Activated CD8-positive, alpha-beta T cell treated with anti-CD3 and anti-CD28 coated beads, Interleukin-2, amount 10 ng/mL, durations not matched to agents 7 days and 5 days (primary cell): ENCODE measurements at regions of chr12 and their contacts with region 1.

Region 1: GRCh38 chr12:123232807-123233543 is at the starts of genes MPHOSPH9 and MTRFR:
- DNase-seq: peak; percentile 100
- ATAC-seq: peak; percentile 91
- H3K4me3 Mint-ChIP-seq: peak within 1 kb of the TSS; percentile 97
- H3K27ac Mint-ChIP-seq: peak within 1 kb of the TSS; percentile 97
- H3K4me1 Mint-ChIP-seq: peaks cover 65% of the 10 kb centered on the region
- H3K27me3 Mint-ChIP-seq: no peaks in the 10 kb centered on the region
- total RNA-seq, gene MPHOSPH9: 148 to 149 TPM
- total RNA-seq, gene MTRFR: 28.2 to 30.0 TPM

Region 2: GRCh38 chr12:122974274-122974891 is 258.6 kb before region 1 on chr12:
- CTCF ChIA-PET with region 1: interaction called, 14 read pairs
- POLR2A ChIA-PET with region 1: interaction called, 19 read pairs
- DNase-seq: peak; percentile 99
- ATAC-seq: peak; percentile 84
- H3K4me3 Mint-ChIP-seq: peak overlapping the region; percentile 99
- H3K27ac Mint-ChIP-seq: peak overlapping the region; percentile 100
- H3K4me1 Mint-ChIP-seq: peaks cover 40% of the 10 kb centered on the region
- H3K27me3 Mint-ChIP-seq: no peaks in the 10 kb centered on the region

Region 3: GRCh38 chr12:123075646-123076171 is 157.3 kb before region 1 on chr12:
- CTCF ChIA-PET with region 1: interaction called, 16 read pairs
- POLR2A ChIA-PET with region 1: interaction called, 25 read pairs
- DNase-seq: peak; percentile 90
- ATAC-seq: peak; percentile 86
- H3K4me3 Mint-ChIP-seq: peak overlapping the region; percentile 82
- H3K27ac Mint-ChIP-seq: peak overlapping the region; percentile 98
- H3K4me1 Mint-ChIP-seq: peaks cover 55% of the 10 kb centered on the region
- H3K27me3 Mint-ChIP-seq: no peaks in the 10 kb centered on the region

Region 4: DNA sequence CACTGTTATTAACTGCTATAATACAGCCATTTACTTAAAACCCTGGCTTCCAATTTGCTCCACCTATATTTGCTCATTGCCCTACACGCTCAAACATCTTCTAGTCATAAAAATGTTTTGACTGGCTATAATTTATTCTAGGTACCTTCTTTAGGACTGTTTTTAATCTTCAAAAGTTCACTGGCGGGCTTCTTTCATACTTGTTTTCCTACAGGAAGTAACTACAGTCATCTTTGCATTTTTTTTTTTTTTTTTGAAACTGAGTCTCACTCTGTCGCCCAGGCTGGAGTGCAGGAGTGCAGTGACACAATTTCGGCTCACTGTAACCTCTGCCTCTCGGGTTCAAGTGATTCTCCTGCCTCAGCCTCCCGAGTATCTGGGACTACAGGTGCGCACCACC is 32.6 kb before region 1 on chr12:
- CTCF ChIA-PET with region 1: interaction called, 23 read pairs
- POLR2A ChIA-PET with region 1: interaction called, 8 read pairs
- DNase-seq: no peak
- ATAC-seq: peak; percentile 15
- H3K4me3 Mint-ChIP-seq: no peak overlapping the region
- H3K27ac Mint-ChIP-seq: peak overlapping the region; percentile 83
- H3K4me1 Mint-ChIP-seq: peaks cover 19% of the 10 kb centered on the region
- H3K27me3 Mint-ChIP-seq: no peaks in the 10 kb centered on the region

Region 5: DNA sequence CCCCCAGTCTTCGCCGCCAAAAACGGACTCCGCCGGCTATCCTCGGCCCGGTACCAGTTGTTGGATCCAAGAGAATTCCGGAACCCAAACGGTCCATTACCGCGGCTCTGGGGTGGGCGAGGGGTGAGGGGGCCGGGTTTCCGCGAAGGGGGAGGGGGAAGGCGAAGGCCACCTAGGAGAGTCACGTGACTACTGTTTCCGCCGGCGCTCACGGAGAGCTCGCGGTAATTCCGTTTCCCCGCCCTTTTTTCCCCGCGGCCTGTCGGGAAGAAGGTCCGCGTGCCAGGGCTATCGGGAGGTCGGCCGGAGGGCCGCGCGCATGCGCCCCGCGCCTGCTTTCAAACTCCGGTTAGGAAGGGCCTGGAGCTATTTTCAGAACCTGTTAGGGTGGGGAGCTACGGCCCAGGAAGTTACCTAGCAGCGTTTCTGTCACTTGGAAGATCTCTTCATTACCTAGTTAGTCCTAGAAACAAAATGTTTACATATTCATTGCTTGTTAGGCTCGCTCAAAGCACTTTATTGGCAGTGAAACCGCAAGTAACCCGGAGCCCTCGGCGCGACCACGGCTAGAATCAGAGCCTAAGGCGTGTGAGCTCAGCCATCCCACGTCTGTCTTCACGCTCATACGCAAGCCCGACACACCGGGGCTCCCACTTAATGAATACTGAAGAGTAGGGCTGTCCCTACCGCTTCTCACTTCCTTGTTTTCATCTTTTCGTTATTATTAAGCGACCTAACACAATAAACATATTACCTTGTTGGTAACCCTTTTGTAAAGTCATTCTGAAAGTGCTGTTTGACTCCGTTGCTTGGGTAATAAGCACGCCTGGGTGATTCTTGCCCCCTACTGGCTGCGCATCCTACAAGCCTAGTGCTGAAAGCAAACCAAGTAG is 132.3 kb after region 1 on chr12:
- CTCF ChIA-PET with region 1: interaction called, 4 read pairs
- POLR2A ChIA-PET with region 1: interaction called, 14 read pairs
- DNase-seq: peak; percentile 99
- ATAC-seq: peak; percentile 77
- H3K4me3 Mint-ChIP-seq: peak overlapping the region; percentile 88
- H3K27ac Mint-ChIP-seq: peak overlapping the region; percentile 94
- H3K4me1 Mint-ChIP-seq: peaks cover 12% of the 10 kb centered on the region
- H3K27me3 Mint-ChIP-seq: no peaks in the 10 kb centered on the region

Region 6: DNA sequence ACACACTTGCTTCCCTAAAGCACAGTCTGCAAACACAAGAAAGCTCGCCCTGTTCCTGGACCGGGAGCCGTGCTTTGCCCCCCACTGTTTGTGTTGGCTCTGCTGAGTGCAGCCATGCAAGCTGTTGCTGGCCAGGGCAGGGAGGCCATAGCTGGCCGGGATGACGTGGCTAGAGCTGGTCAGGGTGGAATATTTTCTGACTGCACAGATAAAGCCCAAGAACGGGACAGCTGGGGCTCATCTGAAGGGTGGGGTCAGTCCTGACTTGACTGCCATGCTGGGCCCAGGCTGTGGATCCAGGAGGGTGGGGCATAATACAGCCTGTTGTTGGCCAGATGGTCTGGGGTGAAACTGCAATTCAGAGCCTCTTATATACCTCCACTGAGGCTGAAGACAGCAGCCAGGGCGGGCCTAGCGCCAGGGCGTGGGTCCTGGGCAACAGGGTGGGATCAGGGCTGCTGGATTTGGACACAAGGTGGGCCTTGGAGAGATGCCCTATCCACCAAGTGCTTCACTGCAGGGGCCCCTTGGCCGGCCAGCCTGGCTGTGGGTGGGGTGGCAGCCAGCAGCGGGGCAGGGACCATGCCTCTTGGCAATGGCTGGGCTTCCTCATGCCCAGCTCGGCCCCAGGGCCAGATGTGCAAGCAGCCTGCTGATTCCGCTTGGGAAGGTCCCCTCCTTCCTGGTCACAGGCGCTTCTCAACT is 165.7 kb after region 1 on chr12:
- CTCF ChIA-PET with region 1: no interaction called
- POLR2A ChIA-PET with region 1: no interaction called
- DNase-seq: no peak
- ATAC-seq: peak; percentile 23
- H3K4me3 Mint-ChIP-seq: no peak overlapping the region
- H3K27ac Mint-ChIP-seq: no peak overlapping the region
- H3K4me1 Mint-ChIP-seq: no peaks in the 10 kb centered on the region
- H3K27me3 Mint-ChIP-seq: no peaks in the 10 kb centered on the region

Region 7: GRCh38 chr12:123713398-123713797 is 480.4 kb after region 1 on chr12:
- CTCF ChIA-PET with region 1: no interaction called
- POLR2A ChIA-PET with region 1: interaction called, 10 read pairs
- DNase-seq: peak; percentile 27
- ATAC-seq: no peak
- H3K4me3 Mint-ChIP-seq: peak overlapping the region; percentile 81
- H3K27ac Mint-ChIP-seq: peak overlapping the region; percentile 72
- H3K4me1 Mint-ChIP-seq: peaks cover 35% of the 10 kb centered on the region
- H3K27me3 Mint-ChIP-seq: no peaks in the 10 kb centered on the region